ENCODE measurements at regions of chr14 and their contacts with region 1.

Region 1: GRCh38 chr14:44970907-44971306 is 8.9 kb downstream of the TOGARAM1 start:
- DNase-seq: no peak
- ATAC-seq: no peak
- H3K4me3 ChIP-seq: no peak overlapping the region
- H3K27ac ChIP-seq: no peak overlapping the region
- H3K4me1 ChIP-seq: peaks cover 0 to 38% (median 21%) of the 10 kb centered on the region in 12 donors
- H3K27me3 ChIP-seq: no peaks in the 10 kb centered on the region
- CTCF ChIP-seq: no peak
- POLR2A ChIP-seq: no peak

Region 2: GRCh38 chr14:44989497-44990440 is 18.9 kb after region 1 on chr14:
- intact Hi-C with region 1: loop called in 2 of 10 experiments (anchors 2 kb)
- DNase-seq: no peak
- ATAC-seq: peak; percentile 22 to 48 (median 32)
- H3K4me3 ChIP-seq: no peak overlapping the region
- H3K27ac ChIP-seq: peak overlapping the region in 9 of 12 donors; percentile 13 to 60 (median 31)
- H3K4me1 ChIP-seq: peaks cover 3 to 24% (median 14%) of the 10 kb centered on the region in 12 donors
- H3K27me3 ChIP-seq: no peaks in the 10 kb centered on the region
- CTCF ChIP-seq: no peak
- POLR2A ChIP-seq: no peak